ENCODE measurements at regions of chr1 and their contacts with region 1.

Region 1: DNA sequence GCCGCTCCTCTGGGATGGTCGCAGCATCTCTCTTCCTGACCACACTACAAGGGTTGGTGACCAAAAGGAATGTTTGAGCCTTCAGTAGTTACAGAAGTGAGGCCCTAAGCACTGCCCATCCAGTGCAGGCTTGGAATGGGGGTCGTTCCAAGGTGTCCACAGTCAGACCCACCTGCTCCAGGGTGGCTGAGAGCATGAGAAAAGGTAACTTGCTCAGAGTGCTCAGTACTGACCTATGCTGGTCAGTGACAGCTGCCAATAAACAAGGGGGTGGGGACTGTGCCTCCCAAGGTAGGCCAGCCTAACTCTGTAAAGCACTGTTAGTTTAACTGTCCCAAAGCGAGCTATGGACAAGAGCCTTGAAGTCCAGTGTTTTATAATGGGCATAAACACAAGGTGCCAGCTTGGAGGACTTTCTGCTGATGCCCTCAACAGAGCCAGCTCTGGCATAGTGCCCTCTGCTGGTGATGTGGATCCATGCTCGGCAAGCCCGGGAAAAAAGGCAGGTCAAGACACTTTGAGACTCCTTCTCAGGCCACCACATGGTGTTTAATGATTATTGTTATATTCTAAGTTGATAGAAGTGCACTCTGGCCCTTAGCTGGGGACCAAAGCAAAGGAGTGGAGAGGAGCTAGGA is 78.1 kb upstream of the DNAH14 start:
- DNase-seq: no peak
- H3K4me3 ChIP-seq: no peak overlapping the region
- H3K27ac ChIP-seq: no peak overlapping the region
- H3K27me3 ChIP-seq: no peaks in the 10 kb centered on the region
- CTCF ChIP-seq: peak; percentile 82

Region 2: DNA sequence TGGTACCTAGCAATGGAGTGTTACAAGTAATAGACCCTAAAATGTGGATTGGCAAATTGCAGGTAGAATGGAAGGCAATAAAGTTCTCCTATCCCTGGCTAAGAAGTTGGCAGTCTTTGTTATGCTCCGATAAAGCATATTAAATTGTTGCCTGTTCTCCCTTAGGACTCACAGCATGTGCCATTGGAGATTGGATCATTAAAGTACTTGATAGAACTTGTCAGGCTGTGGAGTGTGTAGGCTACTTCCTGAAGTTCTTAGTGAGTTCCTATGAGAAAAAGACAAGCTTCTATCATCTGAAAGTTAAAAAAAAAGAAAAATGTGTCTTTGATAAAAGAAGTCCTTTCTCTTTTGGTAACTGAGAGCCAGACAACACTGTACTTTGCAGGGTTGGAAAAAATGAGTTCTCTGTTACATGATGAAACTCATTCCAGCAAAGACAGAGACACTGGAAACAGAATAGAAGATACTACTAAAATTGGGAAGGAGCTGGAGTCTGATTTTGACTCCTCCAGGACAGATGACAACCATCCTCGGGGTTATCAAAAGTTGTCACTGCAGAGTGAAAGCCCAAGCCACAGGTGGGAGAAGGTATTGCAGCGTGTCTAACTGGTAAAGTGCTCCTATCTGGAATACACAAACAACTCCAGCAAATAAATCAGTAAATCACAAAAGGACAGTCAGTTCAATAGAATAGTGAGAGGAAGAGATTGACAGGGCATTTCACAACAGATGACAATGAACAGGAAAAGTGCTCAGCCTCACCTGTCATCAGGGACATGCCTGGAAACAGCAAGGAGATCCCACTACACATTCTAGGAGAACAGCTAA is 329.2 kb before region 1 on chr1:
- CTCF ChIA-PET with region 1: interaction called, 327 read pairs
- POLR2A ChIA-PET with region 1: no interaction called
- DNase-seq: no peak
- H3K4me3 ChIP-seq: no peak overlapping the region
- H3K27ac ChIP-seq: no peak overlapping the region
- H3K27me3 ChIP-seq: no peaks in the 10 kb centered on the region
- CTCF ChIP-seq: peak; percentile 9; the same call in 1 of the 2 replicates

Region 3: GRCh38 chr1:224700915-224701531 is 150.3 kb before region 1 on chr1:
- CTCF ChIA-PET with region 1: interaction called, 15 read pairs
- POLR2A ChIA-PET with region 1: no interaction called
- DNase-seq: no peak
- H3K4me3 ChIP-seq: no peak overlapping the region
- H3K27ac ChIP-seq: no peak overlapping the region
- H3K27me3 ChIP-seq: no peaks in the 10 kb centered on the region
- CTCF ChIP-seq: peak; percentile 42

Region 4: GRCh38 chr1:224777180-224777579 is 74.1 kb before region 1 on chr1:
- CTCF ChIA-PET with region 1: interaction called, 13 read pairs
- POLR2A ChIA-PET with region 1: no interaction called
- DNase-seq: no peak
- H3K4me3 ChIP-seq: no peak overlapping the region
- H3K27ac ChIP-seq: no peak overlapping the region
- H3K27me3 ChIP-seq: no peaks in the 10 kb centered on the region
- CTCF ChIP-seq: no peak

Region 5: GRCh38 chr1:224884361-224884801 is 33.1 kb after region 1 on chr1:
- CTCF ChIA-PET with region 1: interaction called, 12 read pairs
- POLR2A ChIA-PET with region 1: no interaction called
- DNase-seq: peak; percentile 41
- H3K4me3 ChIP-seq: no peak overlapping the region
- H3K27ac ChIP-seq: no peak overlapping the region
- H3K27me3 ChIP-seq: peaks cover 22% of the 10 kb centered on the region
- CTCF ChIP-seq: no peak